Activated naive CD4-positive, alpha-beta T cell treated with anti-CD3 and anti-CD28 coated beads for 36 hours (primary cell): ENCODE measurements at regions of chrX and their contacts with region 1.

Region 1: GRCh38 chrX:51404445-51404844 is 71.8 kb downstream of the NUDT10 start:
- DNase-seq: no peak
- H3K4me3 Mint-ChIP-seq: no peak overlapping the region
- H3K27ac Mint-ChIP-seq: no peak overlapping the region
- H3K4me1 Mint-ChIP-seq: peaks cover 11% of the 10 kb centered on the region
- H3K27me3 Mint-ChIP-seq: no peaks in the 10 kb centered on the region

Region 2: GRCh38 chrX:51420610-51421009 is 16.2 kb after region 1 on chrX:
- CTCF ChIA-PET with region 1: interaction called, 5 read pairs
- intact Hi-C with region 1: loop called (anchors 1 kb)
- DNase-seq: peak; percentile 37
- H3K4me3 Mint-ChIP-seq: no peak overlapping the region
- H3K27ac Mint-ChIP-seq: no peak overlapping the region
- H3K4me1 Mint-ChIP-seq: peaks cover 6% of the 10 kb centered on the region
- H3K27me3 Mint-ChIP-seq: no peaks in the 10 kb centered on the region

Region 3: DNA sequence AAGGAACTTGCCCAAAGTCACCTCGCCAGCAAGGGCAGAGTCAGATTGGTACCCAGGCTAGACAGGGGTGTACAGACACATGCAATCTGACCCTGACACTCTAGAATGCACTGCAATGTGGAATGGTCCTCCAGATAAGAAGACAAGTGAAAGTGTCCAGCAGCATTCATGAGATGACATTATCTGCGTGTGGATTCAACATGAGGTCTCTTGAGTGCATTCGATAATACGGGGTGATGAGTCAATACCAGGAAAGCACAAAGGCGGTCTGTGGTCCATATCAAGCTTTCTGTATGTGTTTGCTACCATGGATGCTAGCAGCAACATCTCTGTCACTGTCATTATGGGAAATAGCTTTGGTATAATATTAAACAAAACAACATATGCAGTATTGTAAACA is 1470.2 kb after region 1 on chrX:
- CTCF ChIA-PET with region 1: no interaction called
- intact Hi-C with region 1: no loop called
- DNase-seq: no peak
- H3K4me3 Mint-ChIP-seq: no peak overlapping the region
- H3K27ac Mint-ChIP-seq: no peak overlapping the region
- H3K4me1 Mint-ChIP-seq: no peaks in the 10 kb centered on the region
- H3K27me3 Mint-ChIP-seq: no peaks in the 10 kb centered on the region